Sciatic nerve (tissue), 2 donors: ENCODE measurements at regions of chr13 and their contacts with region 1.

Region 1: DNA sequence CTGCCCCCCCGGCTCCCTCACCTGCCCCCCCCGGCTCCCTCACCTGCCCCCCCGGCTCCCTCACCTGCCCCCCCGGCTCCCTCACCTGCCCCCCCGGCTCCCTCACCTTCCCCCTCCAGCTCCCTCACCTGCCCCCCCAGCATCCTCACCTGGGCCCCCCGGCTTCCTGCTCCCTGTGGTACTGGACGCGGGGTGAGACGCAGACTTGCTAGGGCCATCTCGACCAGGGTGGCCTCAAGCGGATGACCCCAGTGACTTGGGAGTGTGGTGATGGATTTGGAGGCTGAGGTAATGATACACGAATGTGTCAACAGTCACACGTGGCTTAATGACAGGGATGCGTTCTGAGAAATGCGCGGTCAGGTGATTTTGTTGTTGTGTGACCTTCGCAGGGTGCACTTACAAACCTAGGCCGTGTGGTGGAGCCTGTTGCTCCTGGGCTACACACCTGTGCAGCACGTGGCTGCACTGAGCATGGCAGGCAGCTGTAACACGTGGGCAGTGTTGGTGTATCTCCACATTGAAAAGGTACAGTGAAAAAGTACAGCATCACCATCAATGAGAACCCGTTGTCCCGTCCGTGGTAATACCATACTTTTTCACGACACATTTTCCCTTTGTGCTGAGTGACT is 197.8 kb downstream of the TEX29 start:
- DNase-seq: peak; percentile 31
- ATAC-seq: no peak

Region 2: GRCh38 chr13:111361873-111362648 is 156.2 kb before region 1 on chr13:
- intact Hi-C with region 1: no loop called
- DNase-seq: no peak
- ATAC-seq: no peak

Region 3: GRCh38 chr13:111437856-111438547 is 80.3 kb before region 1 on chr13:
- intact Hi-C with region 1: loop called (anchors 1 kb)
- DNase-seq: no peak
- ATAC-seq: no peak